Prostate gland (tissue), 2 donors: ENCODE measurements at regions of chr18 and their contacts with region 1.

Region 1: DNA sequence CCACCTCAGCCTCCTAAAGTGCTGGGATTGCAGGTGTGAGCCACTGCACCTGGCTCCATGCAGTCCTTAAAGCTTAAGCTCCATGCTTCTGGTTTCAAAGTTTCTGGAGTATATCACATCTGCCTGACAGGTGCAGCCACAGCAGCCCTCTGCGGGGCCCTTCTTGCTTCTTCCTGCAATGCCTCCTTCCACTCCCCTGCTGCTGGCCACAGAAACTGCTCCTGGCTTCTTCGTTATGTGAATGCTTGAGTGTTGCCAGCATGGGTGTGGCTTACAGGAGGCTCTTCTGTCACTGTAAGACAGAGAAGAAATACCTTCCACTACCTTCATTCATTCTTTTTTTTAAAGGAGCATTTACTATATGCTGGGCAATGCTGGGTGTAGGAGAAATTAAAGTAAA is 10.1 kb upstream of the CCBE1 start:
- DNase-seq: no peak
- H3K4me3 ChIP-seq: no peak overlapping the region
- H3K27ac ChIP-seq: no peak overlapping the region
- H3K4me1 ChIP-seq: no peaks in the 10 kb centered on the region
- H3K27me3 ChIP-seq: no peaks in the 10 kb centered on the region
- CTCF ChIP-seq: no peak
- POLR2A ChIP-seq: no peak

Region 2: DNA sequence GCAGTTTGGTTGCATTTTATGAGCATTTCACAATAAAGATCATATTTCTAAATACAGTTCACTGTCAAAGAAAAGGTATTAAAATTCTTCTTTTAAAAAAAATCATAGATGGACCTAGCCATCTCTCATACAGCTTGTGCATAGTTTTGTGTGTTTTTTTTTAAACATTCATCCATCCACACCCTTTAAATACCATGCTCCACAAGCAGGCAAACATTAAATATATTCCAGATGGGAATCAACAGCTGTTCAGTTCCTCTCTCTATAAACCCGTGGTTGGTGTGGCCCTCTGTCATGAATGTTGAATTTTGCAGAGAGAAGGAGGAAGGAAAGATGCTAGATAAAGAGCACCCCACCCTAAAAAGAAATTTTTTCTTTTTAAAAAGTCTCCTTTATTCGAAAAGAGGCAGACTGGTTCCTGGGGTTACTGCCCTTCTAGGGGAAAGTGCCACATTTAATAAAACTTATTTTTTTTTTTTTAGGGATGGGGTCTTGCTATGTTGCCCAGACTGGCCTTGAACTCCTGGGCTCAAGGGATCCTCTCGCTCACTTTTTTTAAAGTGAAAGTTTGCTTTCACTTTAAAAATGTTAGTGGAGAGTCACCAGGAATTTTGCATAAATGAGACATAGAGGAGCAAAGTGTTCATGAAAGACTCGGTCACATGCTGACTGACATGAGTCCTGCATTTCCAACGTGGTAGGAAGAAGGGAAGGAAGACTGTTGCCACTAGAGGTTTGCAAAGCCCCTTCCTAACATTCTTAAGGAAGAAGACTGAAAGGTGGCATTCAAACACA is 274.3 kb before region 1 on chr18:
- intact Hi-C with region 1: no loop called
- DNase-seq: no peak
- H3K4me3 ChIP-seq: no peak overlapping the region
- H3K27ac ChIP-seq: no peak overlapping the region
- H3K4me1 ChIP-seq: no peaks in the 10 kb centered on the region
- H3K27me3 ChIP-seq: no peaks in the 10 kb centered on the region
- CTCF ChIP-seq: no peak
- POLR2A ChIP-seq: no peak

Region 3: GRCh38 chr18:59783138-59783537 is 75.8 kb after region 1 on chr18:
- intact Hi-C with region 1: loop called (anchors 2 kb)
- DNase-seq: no peak
- H3K4me3 ChIP-seq: no peak overlapping the region
- H3K27ac ChIP-seq: no peak overlapping the region
- H3K4me1 ChIP-seq: no peaks in the 10 kb centered on the region
- H3K27me3 ChIP-seq: no peaks in the 10 kb centered on the region
- CTCF ChIP-seq: peak in 2 of 4 experiments; percentile 10 to 28
- POLR2A ChIP-seq: no peak

Region 4: GRCh38 chr18:59918320-59918755 is 211.0 kb after region 1 on chr18:
- intact Hi-C with region 1: no loop called
- DNase-seq: no peak
- H3K4me3 ChIP-seq: no peak overlapping the region
- H3K27ac ChIP-seq: no peak overlapping the region
- H3K4me1 ChIP-seq: no peaks in the 10 kb centered on the region
- H3K27me3 ChIP-seq: no peaks in the 10 kb centered on the region
- CTCF ChIP-seq: no peak
- POLR2A ChIP-seq: no peak